ENCODE measurements at regions of chr22 and their contacts with region 1.

Region 1: GRCh38 chr22:38104084-38104483 is 6.4 kb downstream of the BAIAP2L2 start:
- DNase-seq: peak; percentile 8
- ATAC-seq: peak; percentile 75
- H3K4me3 ChIP-seq: no peak overlapping the region
- H3K27ac ChIP-seq: no peak overlapping the region
- H3K4me1 ChIP-seq: peaks cover 3 to 13% of the 10 kb centered on the region in 2 experiments; a peak in 3 of 4 replicates
- H3K27me3 ChIP-seq: no peaks in the 10 kb centered on the region
- CTCF ChIP-seq: peak; percentile 42 to 66 (median 64); a peak in 5 of 6 replicates
- POLR2A ChIP-seq: no peak
- RAD21 ChIP-seq: peak; percentile 43

Region 2: DNA sequence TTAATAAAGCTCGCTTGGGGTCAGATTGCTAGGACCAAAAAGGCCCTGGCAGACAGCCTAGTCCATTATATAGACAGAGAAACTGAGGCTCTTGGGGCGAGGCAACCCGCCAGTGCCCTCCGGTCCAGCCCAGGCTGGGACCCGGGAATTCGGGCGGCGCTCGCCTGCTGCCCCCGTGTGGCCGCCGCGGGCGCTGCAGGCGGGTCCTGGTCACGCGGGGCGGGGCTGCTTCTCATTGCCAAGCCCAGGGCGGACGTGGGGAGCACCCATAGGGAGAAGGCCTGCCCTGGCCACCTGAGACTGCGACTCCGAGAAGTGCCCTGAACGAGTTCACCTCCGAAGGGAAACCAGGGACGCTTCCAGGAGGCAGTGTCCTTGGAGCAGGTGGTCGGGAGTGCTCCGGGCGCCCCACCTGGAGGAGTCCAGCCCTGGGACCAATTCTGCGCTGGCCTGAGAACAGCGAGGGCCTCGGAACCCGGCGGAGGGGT is 249.1 kb after region 1 on chr22:
- CTCF ChIA-PET with region 1: no interaction called
- POLR2A ChIA-PET with region 1: no interaction called
- RAD21 ChIA-PET with region 1: no interaction called
- intact Hi-C with region 1: loop called (anchors 2 kb)
- DNase-seq: peak; percentile 8
- ATAC-seq: peak; percentile 90
- H3K4me3 ChIP-seq: no peak overlapping the region
- H3K27ac ChIP-seq: no peak overlapping the region
- H3K4me1 ChIP-seq: peaks cover 0 to 6% of the 10 kb centered on the region in 2 experiments; a peak in 1 of 4 replicates
- H3K27me3 ChIP-seq: no peaks in the 10 kb centered on the region
- CTCF ChIP-seq: peak; percentile 81 to 96 (median 94)
- POLR2A ChIP-seq: no peak
- RAD21 ChIP-seq: peak; percentile 90